ENCODE measurements at regions of chr18 and their contacts with region 1.

Region 1: GRCh38 chr18:32714571-32715148 is 58.2 kb downstream of the KLHL14 start:
- DNase-seq: peak in 1 of 2 experiments; percentile 31
- H3K4me3 ChIP-seq: no peak overlapping the region
- H3K4me3 Mint-ChIP-seq: no peak overlapping the region
- H3K27ac Mint-ChIP-seq: no peak overlapping the region
- H3K4me1 ChIP-seq: no peaks in the 10 kb centered on the region
- H3K4me1 Mint-ChIP-seq: no peaks in the 10 kb centered on the region
- H3K27me3 ChIP-seq: no peaks in the 10 kb centered on the region
- H3K27me3 Mint-ChIP-seq: no peaks in the 10 kb centered on the region
- CTCF ChIP-seq: peak; percentile 30 to 61

Region 2: DNA sequence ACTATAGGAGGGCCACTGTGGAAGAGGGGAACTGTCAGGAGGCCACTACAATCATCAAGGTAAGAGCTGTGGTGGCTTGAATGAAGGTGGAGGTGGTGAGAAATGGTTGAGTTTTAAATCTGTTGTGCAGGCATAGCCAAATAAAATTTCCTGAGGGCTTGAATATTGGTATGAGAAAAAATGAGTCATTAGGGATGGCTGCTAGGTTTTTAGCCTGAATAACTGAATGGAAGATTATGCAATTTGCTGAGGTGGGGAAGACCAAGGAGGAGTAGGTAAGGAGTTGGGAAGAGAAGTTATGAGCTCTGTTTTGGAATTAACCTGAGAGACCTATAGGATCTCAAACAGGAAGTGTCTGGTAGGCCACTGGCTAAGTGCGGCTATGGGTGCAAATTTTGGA is 25.8 kb before region 1 on chr18:
- CTCF ChIA-PET with region 1: no interaction called
- POLR2A ChIA-PET with region 1: no interaction called
- intact Hi-C with region 1: no loop called
- DNase-seq: no peak
- H3K4me3 ChIP-seq: no peak overlapping the region
- H3K4me3 Mint-ChIP-seq: no peak overlapping the region
- H3K27ac Mint-ChIP-seq: no peak overlapping the region
- H3K4me1 ChIP-seq: no peaks in the 10 kb centered on the region
- H3K4me1 Mint-ChIP-seq: no peaks in the 10 kb centered on the region
- H3K27me3 ChIP-seq: no peaks in the 10 kb centered on the region
- H3K27me3 Mint-ChIP-seq: no peaks in the 10 kb centered on the region
- CTCF ChIP-seq: no peak

Region 3: GRCh38 chr18:32735781-32736180 is 21.1 kb after region 1 on chr18:
- CTCF ChIA-PET with region 1: no interaction called
- POLR2A ChIA-PET with region 1: no interaction called
- intact Hi-C with region 1: no loop called
- DNase-seq: no peak
- H3K4me3 ChIP-seq: no peak overlapping the region
- H3K4me3 Mint-ChIP-seq: no peak overlapping the region
- H3K27ac Mint-ChIP-seq: no peak overlapping the region
- H3K4me1 ChIP-seq: no peaks in the 10 kb centered on the region
- H3K4me1 Mint-ChIP-seq: no peaks in the 10 kb centered on the region
- H3K27me3 ChIP-seq: no peaks in the 10 kb centered on the region
- H3K27me3 Mint-ChIP-seq: peaks cover 7% of the 10 kb centered on the region
- CTCF ChIP-seq: no peak

Region 4: DNA sequence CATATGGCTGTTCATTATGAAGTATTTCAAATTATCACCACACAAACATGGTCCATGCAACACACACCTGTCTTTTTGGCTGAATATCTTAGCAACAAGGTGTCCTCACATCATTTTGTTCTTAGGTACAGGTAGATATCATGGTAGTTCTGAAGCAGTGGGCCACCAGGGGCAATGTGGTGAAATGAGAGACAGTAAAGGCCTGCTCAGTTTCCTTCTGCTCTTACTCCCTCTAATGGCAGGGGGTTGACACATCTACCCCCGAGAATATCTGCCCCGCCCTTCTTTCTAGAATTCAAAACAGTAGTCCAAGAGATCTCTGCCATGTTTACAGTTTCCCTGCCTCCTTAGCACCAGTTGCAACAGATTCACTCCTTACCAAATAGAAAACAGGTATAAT is 205.1 kb after region 1 on chr18:
- CTCF ChIA-PET with region 1: no interaction called
- POLR2A ChIA-PET with region 1: no interaction called
- intact Hi-C with region 1: loop called (anchors 1 kb)
- DNase-seq: peak; percentile 39 to 51
- H3K4me3 ChIP-seq: no peak overlapping the region
- H3K4me3 Mint-ChIP-seq: no peak overlapping the region
- H3K27ac Mint-ChIP-seq: no peak overlapping the region
- H3K4me1 ChIP-seq: no peaks in the 10 kb centered on the region
- H3K4me1 Mint-ChIP-seq: no peaks in the 10 kb centered on the region
- H3K27me3 ChIP-seq: no peaks in the 10 kb centered on the region
- H3K27me3 Mint-ChIP-seq: no peaks in the 10 kb centered on the region
- CTCF ChIP-seq: peak; percentile 45 to 64